GM12878 (cell line): ENCODE measurements at regions of chrX and their contacts with region 1.

Region 1: GRCh38 chrX:39205467-39205866 is 404.2 kb downstream of the MID1IP1 start:
- DNase-seq: no peak
- ATAC-seq: no peak; the same call in 2 of the 3 replicates
- H3K4me3 ChIP-seq: no peak overlapping the region
- H3K27ac ChIP-seq: no peak overlapping the region
- H3K4me1 ChIP-seq: no peaks in the 10 kb centered on the region
- H3K27me3 ChIP-seq: no peaks in the 10 kb centered on the region
- CTCF ChIP-seq: no peak
- EP300 ChIP-seq: no peak
- POLR2A ChIP-seq: no peak
- RAD21 ChIP-seq: no peak

Region 2: DNA sequence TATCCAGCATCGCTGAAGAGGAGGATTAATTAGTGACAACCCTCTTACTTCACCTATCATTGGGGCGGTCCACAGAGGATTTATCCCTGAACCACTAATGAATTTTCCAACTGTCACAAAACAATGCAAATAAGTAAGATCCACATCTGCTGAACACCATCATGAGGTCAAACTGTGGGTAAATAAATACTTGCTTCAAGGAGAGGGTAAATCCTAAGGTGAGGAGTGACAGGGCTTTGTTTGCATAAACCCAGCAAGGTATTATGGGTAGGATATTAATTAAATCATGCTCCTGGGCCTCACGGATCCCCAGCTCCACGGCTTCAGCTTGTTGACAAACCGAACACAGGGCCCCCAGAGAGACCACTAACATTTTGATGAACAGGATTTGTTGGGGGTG is 178.7 kb after region 1 on chrX:
- CTCF ChIA-PET with region 1: no interaction called
- POLR2A ChIA-PET with region 1: no interaction called
- RAD21 ChIA-PET with region 1: no interaction called
- SMC1A ChIA-PET with region 1: no interaction called
- in situ Hi-C with region 1: no loop called
- intact Hi-C with region 1: no loop called
- DNase-seq: no peak
- ATAC-seq: no peak
- H3K4me3 ChIP-seq: no peak overlapping the region
- H3K27ac ChIP-seq: no peak overlapping the region
- H3K4me1 ChIP-seq: no peaks in the 10 kb centered on the region
- H3K27me3 ChIP-seq: no peaks in the 10 kb centered on the region; a peak in 3 of 4 replicates
- CTCF ChIP-seq: no peak
- EP300 ChIP-seq: no peak
- POLR2A ChIP-seq: no peak
- RAD21 ChIP-seq: no peak

Region 3: DNA sequence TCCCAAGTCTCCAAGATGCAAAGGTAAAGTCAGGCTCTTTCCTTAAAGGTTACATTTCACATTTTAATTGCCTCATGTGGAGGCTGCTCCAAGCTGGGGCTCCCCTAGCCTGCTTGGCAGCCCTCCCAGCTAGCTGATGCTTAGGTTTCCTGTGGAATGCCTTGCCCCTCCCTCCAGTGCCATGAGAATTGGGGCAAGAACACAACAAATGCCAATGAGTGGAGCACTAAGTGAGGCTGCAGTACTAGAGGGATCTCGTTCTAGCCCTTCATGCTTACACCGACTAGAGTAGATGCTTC is 193.4 kb after region 1 on chrX:
- CTCF ChIA-PET with region 1: no interaction called
- POLR2A ChIA-PET with region 1: interaction called, 10 read pairs
- RAD21 ChIA-PET with region 1: no interaction called
- SMC1A ChIA-PET with region 1: no interaction called
- in situ Hi-C with region 1: no loop called
- intact Hi-C with region 1: no loop called
- DNase-seq: no peak
- ATAC-seq: no peak
- H3K4me3 ChIP-seq: no peak overlapping the region
- H3K27ac ChIP-seq: no peak overlapping the region
- H3K4me1 ChIP-seq: no peaks in the 10 kb centered on the region
- H3K27me3 ChIP-seq: no peaks in the 10 kb centered on the region
- CTCF ChIP-seq: no peak
- EP300 ChIP-seq: no peak
- POLR2A ChIP-seq: no peak
- RAD21 ChIP-seq: no peak

Region 4: DNA sequence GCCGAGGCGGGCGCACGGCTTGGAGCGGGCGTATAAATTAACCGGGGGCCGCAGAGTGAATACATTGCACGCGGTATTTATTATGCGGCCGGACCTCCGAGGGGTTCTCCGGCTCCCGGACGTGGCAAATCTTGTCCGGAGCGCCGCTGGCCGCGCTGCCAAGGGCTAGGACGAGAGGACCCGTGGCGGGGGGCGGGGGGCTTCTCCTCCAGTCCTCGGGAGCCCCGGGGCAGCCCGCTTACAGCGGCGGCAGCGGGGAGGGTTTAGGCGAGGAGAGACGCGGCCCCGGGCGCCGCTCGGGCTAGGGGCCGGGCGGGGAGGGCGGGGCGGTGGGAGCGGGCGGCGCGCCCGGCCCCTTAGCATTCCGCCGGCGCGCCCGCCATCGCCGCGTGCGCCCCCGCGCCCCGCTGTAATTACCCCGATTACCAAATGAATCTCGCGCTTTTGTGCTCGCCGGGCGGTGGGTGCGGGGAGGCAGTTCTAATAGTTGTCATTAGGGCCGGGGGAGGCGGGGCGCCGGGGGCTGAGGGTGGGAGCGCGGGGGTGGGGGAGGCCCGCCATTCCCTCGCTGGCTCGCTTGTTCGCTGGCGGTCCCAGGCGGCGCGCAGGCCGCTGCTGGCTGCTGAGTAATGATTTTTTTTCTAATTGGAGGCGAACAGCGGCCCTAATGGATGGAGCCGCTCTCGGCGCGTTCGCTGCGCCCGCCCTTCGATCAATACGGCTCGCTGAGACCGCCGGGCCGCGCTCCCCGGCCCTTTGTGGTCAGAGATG is 615.7 kb after region 1 on chrX:
- CTCF ChIA-PET with region 1: no interaction called
- POLR2A ChIA-PET with region 1: no interaction called
- RAD21 ChIA-PET with region 1: no interaction called
- SMC1A ChIA-PET with region 1: no interaction called
- in situ Hi-C with region 1: no loop called
- intact Hi-C with region 1: no loop called
- DNase-seq: no peak
- ATAC-seq: no peak
- H3K4me3 ChIP-seq: no peak overlapping the region
- H3K27ac ChIP-seq: no peak overlapping the region
- H3K4me1 ChIP-seq: peaks cover 5% of the 10 kb centered on the region
- H3K27me3 ChIP-seq: no peaks in the 10 kb centered on the region
- CTCF ChIP-seq: no peak
- EP300 ChIP-seq: no peak
- POLR2A ChIP-seq: no peak
- RAD21 ChIP-seq: no peak